CD4-positive, alpha-beta memory T cell (primary cell): ENCODE measurements at regions of chr15 and their contacts with region 1.

Region 1: GRCh38 chr15:67033571-67034044 is 31.8 kb upstream of the SMAD3 start:
- DNase-seq: peak in 3 of 5 donors; percentile 13 to 26 (median 21)
- H3K4me3 ChIP-seq: peak overlapping the region in 1 of 2 donors; percentile 59
- H3K4me3 Mint-ChIP-seq: peak overlapping the region in 7 of 8 donors; percentile 30 to 73 (median 61)
- H3K27ac ChIP-seq: no peak overlapping the region
- H3K27ac Mint-ChIP-seq: peak overlapping the region in 2 of 7 donors; percentile 29 to 51
- H3K4me1 ChIP-seq: peaks cover 31% of the 10 kb centered on the region
- H3K4me1 Mint-ChIP-seq: peaks cover 17 to 21% (median 19%) of the 10 kb centered on the region in 4 donors
- H3K27me3 ChIP-seq: no peaks in the 10 kb centered on the region
- H3K27me3 Mint-ChIP-seq: no peaks in the 10 kb centered on the region

Region 2: DNA sequence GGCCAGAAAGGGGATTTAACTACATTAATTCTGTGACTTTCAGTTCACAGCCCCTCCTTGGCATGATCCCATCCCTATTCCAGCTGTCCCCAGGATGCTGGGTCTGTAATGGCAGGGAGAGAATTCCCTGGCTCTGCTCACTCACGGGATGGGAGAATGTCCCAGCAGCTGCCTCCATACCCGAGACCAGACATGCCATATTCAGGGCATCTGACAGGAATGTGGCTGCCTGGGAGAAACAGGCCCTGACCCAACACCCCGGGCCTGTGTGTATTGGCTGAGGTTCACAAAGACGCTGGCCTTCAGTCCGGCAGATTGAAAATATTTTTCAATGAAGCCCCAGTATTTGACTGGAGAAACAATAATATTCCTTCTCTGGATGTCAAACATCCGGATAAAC is 51.8 kb before region 1 on chr15:
- CTCF ChIA-PET with region 1: no interaction called
- POLR2A ChIA-PET with region 1: no interaction called
- intact Hi-C with region 1: no loop called
- DNase-seq: no peak
- H3K4me3 ChIP-seq: no peak overlapping the region
- H3K4me3 Mint-ChIP-seq: no peak overlapping the region
- H3K27ac ChIP-seq: no peak overlapping the region
- H3K27ac Mint-ChIP-seq: no peak overlapping the region
- H3K4me1 ChIP-seq: no peaks in the 10 kb centered on the region
- H3K4me1 Mint-ChIP-seq: peaks cover 0 to 4% (median 0%) of the 10 kb centered on the region in 4 donors
- H3K27me3 ChIP-seq: no peaks in the 10 kb centered on the region
- H3K27me3 Mint-ChIP-seq: peaks cover 5 to 13% of the 10 kb centered on the region in 2 donors

Region 3: DNA sequence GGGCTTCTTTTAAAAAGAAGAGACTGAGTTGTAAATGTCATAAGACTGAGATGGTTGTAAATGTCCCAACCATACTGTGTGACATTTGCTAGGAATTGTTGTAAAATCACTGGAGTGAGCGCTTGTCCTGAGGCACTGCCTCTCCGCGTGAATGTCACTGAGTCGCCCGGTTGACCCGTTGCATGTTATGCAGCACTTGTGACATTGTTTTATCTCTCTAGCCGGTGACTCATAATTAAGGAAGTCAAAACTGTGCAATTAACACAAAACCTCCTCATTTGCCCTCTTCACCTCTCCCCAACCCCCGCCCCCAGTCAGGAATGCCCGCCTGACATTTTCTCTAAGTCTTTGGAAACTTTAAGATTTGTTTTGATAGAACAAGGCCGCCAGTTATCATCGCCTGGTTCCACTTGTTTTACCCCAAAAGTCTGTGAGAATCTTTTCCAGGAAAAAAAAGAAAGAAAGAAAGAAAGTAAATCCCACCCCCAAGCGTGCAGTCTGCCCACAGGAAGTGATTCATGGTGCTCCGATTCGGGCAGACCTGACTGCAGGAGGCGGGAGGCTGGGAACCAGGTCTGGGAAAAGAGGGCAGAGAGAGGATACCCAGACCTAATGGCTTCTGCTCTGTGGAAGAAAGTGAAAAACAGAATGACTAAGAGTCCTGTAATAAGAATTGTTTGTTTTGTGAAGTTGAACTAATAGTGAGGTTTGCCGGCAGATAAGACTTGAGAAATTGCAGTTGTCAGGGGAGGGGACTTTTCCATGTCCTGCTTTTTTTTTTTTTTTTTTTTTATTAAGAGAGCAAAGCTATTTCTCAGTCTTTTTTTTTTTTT is 116.6 kb after region 1 on chr15:
- CTCF ChIA-PET with region 1: no interaction called
- POLR2A ChIA-PET with region 1: no interaction called
- intact Hi-C with region 1: no loop called
- DNase-seq: peak in 1 of 5 donors; percentile 68
- H3K4me3 ChIP-seq: peak overlapping the region; percentile 2 to 23
- H3K4me3 Mint-ChIP-seq: peak overlapping the region; percentile 47 to 90 (median 73)
- H3K27ac ChIP-seq: peak overlapping the region; percentile 27
- H3K27ac Mint-ChIP-seq: peak overlapping the region; percentile 43 to 95 (median 77)
- H3K4me1 ChIP-seq: peaks cover 68% of the 10 kb centered on the region
- H3K4me1 Mint-ChIP-seq: peaks cover 63 to 79% (median 72%) of the 10 kb centered on the region in 4 donors
- H3K27me3 ChIP-seq: no peaks in the 10 kb centered on the region
- H3K27me3 Mint-ChIP-seq: no peaks in the 10 kb centered on the region

Region 4: DNA sequence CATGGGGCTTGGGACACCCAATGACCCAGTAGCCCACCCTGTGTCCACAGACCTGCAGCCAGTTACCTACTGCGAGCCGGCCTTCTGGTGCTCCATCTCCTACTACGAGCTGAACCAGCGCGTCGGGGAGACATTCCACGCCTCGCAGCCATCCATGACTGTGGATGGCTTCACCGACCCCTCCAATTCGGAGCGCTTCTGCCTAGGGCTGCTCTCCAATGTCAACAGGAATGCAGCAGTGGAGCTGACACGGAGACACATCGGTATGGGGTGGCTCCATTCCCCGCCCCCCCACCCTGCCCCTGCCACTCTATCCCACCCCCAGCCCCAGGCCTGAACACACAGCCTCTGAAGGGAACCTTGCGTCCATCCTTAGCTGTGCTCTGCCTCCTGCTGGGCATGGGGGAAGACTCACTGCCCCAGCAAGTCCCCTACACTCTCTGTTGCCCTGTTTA is 147.6 kb after region 1 on chr15:
- CTCF ChIA-PET with region 1: no interaction called
- POLR2A ChIA-PET with region 1: no interaction called
- intact Hi-C with region 1: loop called (anchors 1 kb)
- DNase-seq: no peak
- H3K4me3 ChIP-seq: no peak overlapping the region
- H3K4me3 Mint-ChIP-seq: no peak overlapping the region
- H3K27ac ChIP-seq: no peak overlapping the region
- H3K27ac Mint-ChIP-seq: peak overlapping the region in 3 of 7 donors; percentile 37 to 68 (median 64)
- H3K4me1 ChIP-seq: no peaks in the 10 kb centered on the region
- H3K4me1 Mint-ChIP-seq: peaks cover 3 to 20% (median 13%) of the 10 kb centered on the region in 4 donors
- H3K27me3 ChIP-seq: no peaks in the 10 kb centered on the region
- H3K27me3 Mint-ChIP-seq: no peaks in the 10 kb centered on the region

Region 5: DNA sequence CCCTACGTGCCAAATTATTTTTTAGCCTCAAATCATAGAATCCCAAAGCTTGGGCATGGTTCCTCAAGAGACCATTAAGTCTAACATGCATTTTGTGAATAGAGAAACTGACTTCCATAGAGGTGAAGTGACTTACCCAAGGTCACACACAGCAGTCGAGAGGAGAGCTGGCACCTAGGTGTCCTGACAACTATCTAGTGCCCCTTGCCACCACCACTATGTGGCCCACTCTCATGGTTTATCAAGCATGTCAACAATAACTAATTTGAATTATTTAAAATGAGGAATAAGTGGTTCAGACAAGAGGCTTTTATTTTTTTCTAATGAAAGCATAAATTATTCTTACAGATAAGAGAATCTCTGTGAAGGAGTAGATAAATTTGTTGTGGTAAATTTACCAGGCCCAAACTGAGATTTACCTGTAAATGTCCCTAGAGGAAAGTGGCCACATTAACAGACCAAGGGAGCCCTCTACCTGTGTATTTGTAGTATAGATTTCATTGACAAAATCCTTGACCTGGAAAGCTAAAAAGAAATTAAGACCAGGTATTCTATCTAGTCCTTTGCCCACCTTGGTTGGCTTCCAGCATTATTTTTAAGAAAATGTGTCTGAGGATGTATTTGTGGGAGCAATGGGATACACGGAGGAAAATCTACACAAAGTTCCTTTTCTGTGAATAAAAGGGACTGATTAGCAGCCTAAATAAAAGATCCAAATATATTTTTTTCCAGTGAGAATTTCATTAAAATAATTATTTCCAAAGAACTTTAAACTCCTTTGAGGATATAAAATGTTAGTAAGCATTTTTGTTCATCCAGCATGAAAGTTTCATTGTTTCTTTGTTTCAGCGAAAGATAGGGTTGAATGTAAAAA is 270.1 kb after region 1 on chr15:
- CTCF ChIA-PET with region 1: no interaction called
- POLR2A ChIA-PET with region 1: no interaction called
- intact Hi-C with region 1: loop called (anchors 5 kb)
- DNase-seq: peak; percentile 43 to 55 (median 52)
- H3K4me3 ChIP-seq: no peak overlapping the region
- H3K4me3 Mint-ChIP-seq: no peak overlapping the region
- H3K27ac ChIP-seq: no peak overlapping the region
- H3K27ac Mint-ChIP-seq: no peak overlapping the region
- H3K4me1 ChIP-seq: no peaks in the 10 kb centered on the region
- H3K4me1 Mint-ChIP-seq: no peaks in the 10 kb centered on the region
- H3K27me3 ChIP-seq: no peaks in the 10 kb centered on the region
- H3K27me3 Mint-ChIP-seq: peaks cover 2 to 3% of the 10 kb centered on the region in 2 donors